MCF 10A (cell line): ENCODE measurements at regions of chr2 and their contacts with region 1.

Region 1: GRCh38 chr2:174771631-174772471 is 7.6 kb upstream of the CHRNA1 start:
- DNase-seq: peak; percentile 86
- H3K4me3 Mint-ChIP-seq: no peak overlapping the region
- H3K27ac Mint-ChIP-seq: no peak overlapping the region
- H3K4me1 Mint-ChIP-seq: no peaks in the 10 kb centered on the region
- H3K27me3 Mint-ChIP-seq: no peaks in the 10 kb centered on the region
- CTCF ChIP-seq: peak; percentile 86

Region 2: DNA sequence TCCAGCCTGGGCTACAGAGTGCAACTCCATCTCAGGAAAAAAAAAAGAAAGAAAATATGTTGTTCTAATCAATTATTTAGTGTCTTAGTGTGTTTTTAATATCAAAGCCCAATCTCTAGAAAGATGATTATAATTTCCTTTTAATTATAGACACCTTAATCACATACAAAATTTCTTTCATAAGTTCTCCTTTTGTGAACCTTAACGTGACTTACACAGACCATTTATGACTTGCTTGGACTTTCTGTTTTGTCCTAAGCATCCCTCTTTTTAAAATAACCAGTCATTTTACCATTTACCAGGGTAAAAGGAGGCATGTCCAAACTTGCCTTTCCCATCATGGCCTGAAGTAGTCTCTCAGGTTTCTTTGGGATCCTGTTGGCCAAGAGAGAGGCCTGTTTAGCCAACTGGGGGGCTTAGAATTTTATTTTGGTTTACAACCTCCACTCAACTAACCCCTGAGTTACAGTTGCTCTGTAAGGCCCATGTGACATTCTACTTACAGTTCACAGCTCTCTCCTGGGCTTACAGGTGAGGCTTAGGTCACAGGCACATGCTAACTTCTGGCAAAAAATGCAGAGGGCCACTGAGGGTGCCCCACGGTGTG is 261.2 kb before region 1 on chr2:
- CTCF ChIA-PET with region 1: no interaction called
- POLR2A ChIA-PET with region 1: no interaction called
- intact Hi-C with region 1: no loop called
- DNase-seq: peak; percentile 53
- H3K4me3 Mint-ChIP-seq: no peak overlapping the region
- H3K27ac Mint-ChIP-seq: no peak overlapping the region
- H3K4me1 Mint-ChIP-seq: no peaks in the 10 kb centered on the region
- H3K27me3 Mint-ChIP-seq: no peaks in the 10 kb centered on the region
- CTCF ChIP-seq: no peak

Region 3: GRCh38 chr2:174748948-174749347 is 22.9 kb before region 1 on chr2:
- CTCF ChIA-PET with region 1: interaction called, 22 read pairs
- POLR2A ChIA-PET with region 1: interaction called, 5 read pairs
- intact Hi-C with region 1: no loop called
- DNase-seq: peak; percentile 81
- H3K4me3 Mint-ChIP-seq: no peak overlapping the region
- H3K27ac Mint-ChIP-seq: no peak overlapping the region
- H3K4me1 Mint-ChIP-seq: peaks cover 5% of the 10 kb centered on the region
- H3K27me3 Mint-ChIP-seq: no peaks in the 10 kb centered on the region
- CTCF ChIP-seq: peak; percentile 67

Region 4: GRCh38 chr2:174797781-174798276 is 26.0 kb after region 1 on chr2:
- CTCF ChIA-PET with region 1: interaction called, 21 read pairs
- POLR2A ChIA-PET with region 1: no interaction called
- intact Hi-C with region 1: no loop called
- DNase-seq: no peak
- H3K4me3 Mint-ChIP-seq: no peak overlapping the region
- H3K27ac Mint-ChIP-seq: no peak overlapping the region
- H3K4me1 Mint-ChIP-seq: no peaks in the 10 kb centered on the region
- H3K27me3 Mint-ChIP-seq: no peaks in the 10 kb centered on the region
- CTCF ChIP-seq: no peak

Region 5: DNA sequence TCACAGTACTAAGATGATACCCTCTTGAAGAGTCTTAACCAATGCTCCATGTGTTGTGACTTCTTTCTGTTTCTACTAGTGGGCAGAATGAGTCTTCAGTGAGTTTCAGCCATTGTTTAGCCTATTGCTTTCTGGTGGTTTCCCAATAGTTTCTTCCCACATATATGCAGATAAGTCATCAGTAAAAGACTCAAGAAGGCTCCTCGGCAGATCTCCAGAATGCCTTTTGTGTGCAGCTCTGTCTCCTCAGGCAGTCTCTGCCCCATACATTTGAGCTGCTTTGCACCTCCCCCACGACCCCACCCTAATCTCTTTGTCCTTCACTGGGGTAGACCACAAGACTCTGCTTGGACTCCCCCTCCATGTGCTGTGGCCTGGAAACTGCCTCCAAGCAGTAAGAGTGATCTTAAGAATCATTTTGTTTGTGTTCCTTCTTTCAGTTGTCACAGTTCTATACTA is 64.0 kb after region 1 on chr2:
- CTCF ChIA-PET with region 1: interaction called, 5 read pairs
- POLR2A ChIA-PET with region 1: interaction called, 11 read pairs
- intact Hi-C with region 1: no loop called
- DNase-seq: peak; percentile 96
- H3K4me3 Mint-ChIP-seq: peak overlapping the region; percentile 56
- H3K27ac Mint-ChIP-seq: peak overlapping the region; percentile 99
- H3K4me1 Mint-ChIP-seq: peaks cover 66% of the 10 kb centered on the region
- H3K27me3 Mint-ChIP-seq: no peaks in the 10 kb centered on the region
- CTCF ChIP-seq: no peak

Region 6: GRCh38 chr2:174971865-174972781 is 200.3 kb after region 1 on chr2:
- CTCF ChIA-PET with region 1: interaction called, 14 read pairs
- POLR2A ChIA-PET with region 1: interaction called, 4 read pairs
- intact Hi-C with region 1: no loop called
- DNase-seq: peak; percentile 78
- H3K4me3 Mint-ChIP-seq: no peak overlapping the region
- H3K27ac Mint-ChIP-seq: peak overlapping the region; percentile 46
- H3K4me1 Mint-ChIP-seq: peaks cover 20% of the 10 kb centered on the region
- H3K27me3 Mint-ChIP-seq: no peaks in the 10 kb centered on the region
- CTCF ChIP-seq: no peak

Region 7: DNA sequence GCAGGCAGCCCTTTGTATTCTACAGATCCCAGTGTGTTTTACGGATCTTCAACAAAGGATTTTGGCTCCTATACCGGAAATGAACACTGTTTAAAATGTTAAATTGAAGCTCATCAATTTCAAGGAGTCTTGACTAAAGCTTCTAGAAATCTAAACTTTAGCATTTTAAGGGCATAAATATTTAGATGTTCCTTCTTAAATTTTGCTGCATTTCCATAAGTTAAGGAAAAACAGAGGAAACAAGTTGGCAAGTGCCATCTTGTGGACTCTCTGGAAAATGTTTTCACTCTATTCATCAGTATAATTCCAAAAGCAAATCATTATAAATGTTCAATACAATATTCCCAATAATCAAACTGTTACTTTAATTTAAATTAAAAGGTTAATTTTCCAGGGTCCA is 213.8 kb after region 1 on chr2:
- CTCF ChIA-PET with region 1: interaction called, 259 read pairs
- POLR2A ChIA-PET with region 1: interaction called, 22 read pairs
- intact Hi-C with region 1: loop called (anchors 1 kb)
- DNase-seq: peak; percentile 45
- H3K4me3 Mint-ChIP-seq: no peak overlapping the region
- H3K27ac Mint-ChIP-seq: no peak overlapping the region
- H3K4me1 Mint-ChIP-seq: peaks cover 5% of the 10 kb centered on the region
- H3K27me3 Mint-ChIP-seq: no peaks in the 10 kb centered on the region
- CTCF ChIP-seq: peak; percentile 58

Region 8: GRCh38 chr2:175030380-175031271 is 258.8 kb after region 1 on chr2:
- CTCF ChIA-PET with region 1: interaction called, 11 read pairs
- POLR2A ChIA-PET with region 1: no interaction called
- intact Hi-C with region 1: no loop called
- DNase-seq: peak; percentile 49
- H3K4me3 Mint-ChIP-seq: no peak overlapping the region
- H3K27ac Mint-ChIP-seq: no peak overlapping the region
- H3K4me1 Mint-ChIP-seq: no peaks in the 10 kb centered on the region
- H3K27me3 Mint-ChIP-seq: no peaks in the 10 kb centered on the region
- CTCF ChIP-seq: peak; percentile 28